ENCODE measurements at regions of chr7 and their contacts with region 1.

Region 1: GRCh38 chr7:139620676-139621344 is 97.3 kb downstream of the CLEC2L start:
- DNase-seq: no peak
- ATAC-seq: peak; percentile 42 to 44

Region 2: DNA sequence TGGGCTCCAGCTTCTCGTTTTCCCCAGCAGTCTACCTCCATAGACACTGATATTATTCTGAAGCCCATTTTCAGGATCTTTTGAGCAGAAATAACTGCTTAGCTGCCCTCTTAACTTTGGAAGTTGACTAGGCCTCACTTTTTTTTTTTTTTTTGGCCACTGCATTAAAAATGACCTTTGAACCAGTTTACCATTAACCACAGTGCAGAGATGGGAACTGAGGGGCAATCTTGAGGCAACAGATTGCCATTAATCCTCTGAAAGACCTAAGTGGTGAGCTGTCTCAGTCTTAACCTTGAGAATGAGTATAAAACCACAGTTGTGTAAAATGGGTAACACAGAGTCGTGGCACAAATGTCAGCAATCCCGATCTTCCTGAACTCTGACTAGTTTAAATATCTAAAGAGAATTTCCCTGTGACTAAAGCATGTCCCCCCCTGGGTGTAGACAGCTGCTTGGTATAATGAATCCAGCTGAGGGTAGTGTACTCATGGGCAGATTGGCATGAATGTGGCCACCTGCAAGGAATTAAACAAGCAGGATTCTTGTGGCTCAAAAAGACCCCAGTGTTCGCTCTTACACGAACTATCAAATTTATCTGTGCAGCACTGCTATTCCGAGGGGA is 325.7 kb before region 1 on chr7:
- intact Hi-C with region 1: no loop called
- DNase-seq: no peak
- ATAC-seq: no peak

Region 3: GRCh38 chr7:139995017-139995931 is 374.5 kb after region 1 on chr7:
- intact Hi-C with region 1: loop called in 1 of 2 experiments (anchors 5 kb)
- DNase-seq: peak; percentile 49
- ATAC-seq: peak; percentile 87 to 89

Region 4: DNA sequence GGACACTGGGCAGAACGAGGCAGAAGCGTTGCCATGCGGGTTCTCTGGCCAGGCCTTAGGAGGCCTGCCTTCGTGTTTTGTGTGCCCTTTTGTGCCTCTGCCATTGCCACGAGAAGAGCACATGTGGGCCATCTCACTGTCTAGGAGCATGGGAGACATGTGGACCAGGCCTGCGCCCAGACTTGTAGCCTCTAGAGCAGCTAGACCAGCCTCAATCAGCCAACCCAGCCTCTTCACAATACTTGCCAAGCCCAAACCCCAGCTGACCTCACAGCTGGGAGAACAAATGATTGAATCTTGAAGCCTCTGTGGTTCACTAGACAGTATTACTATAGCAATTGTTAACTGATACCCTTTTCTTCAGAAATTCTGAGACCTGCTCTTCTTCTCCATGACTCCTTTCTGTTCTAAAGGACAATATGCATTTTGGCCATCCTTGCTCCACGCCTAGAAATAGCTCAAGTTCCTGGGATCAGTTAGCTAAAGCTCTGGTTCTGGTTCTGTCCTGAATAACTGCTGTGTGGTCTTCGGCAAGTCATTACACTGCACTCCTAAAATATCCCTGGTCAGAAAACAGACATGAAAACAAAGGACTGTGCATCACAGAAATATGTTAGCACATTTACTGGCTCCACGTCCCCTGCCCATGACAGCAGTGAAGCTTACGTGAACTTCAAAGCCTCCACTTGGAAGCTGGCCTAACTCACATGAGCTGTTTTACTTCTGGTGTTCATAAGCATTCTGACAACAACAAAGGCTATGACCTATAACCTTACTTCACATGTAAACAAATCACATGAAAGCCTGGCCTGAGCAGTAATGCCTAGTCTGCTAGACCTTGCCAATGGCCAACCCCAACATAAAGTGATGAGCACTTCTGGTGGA is 930.8 kb after region 1 on chr7:
- intact Hi-C with region 1: no loop called
- DNase-seq: no peak
- ATAC-seq: peak; percentile 49 to 50